Mammary epithelial cell (primary cell): ENCODE measurements at regions of chr17 and their contacts with region 1.

Region 1: DNA sequence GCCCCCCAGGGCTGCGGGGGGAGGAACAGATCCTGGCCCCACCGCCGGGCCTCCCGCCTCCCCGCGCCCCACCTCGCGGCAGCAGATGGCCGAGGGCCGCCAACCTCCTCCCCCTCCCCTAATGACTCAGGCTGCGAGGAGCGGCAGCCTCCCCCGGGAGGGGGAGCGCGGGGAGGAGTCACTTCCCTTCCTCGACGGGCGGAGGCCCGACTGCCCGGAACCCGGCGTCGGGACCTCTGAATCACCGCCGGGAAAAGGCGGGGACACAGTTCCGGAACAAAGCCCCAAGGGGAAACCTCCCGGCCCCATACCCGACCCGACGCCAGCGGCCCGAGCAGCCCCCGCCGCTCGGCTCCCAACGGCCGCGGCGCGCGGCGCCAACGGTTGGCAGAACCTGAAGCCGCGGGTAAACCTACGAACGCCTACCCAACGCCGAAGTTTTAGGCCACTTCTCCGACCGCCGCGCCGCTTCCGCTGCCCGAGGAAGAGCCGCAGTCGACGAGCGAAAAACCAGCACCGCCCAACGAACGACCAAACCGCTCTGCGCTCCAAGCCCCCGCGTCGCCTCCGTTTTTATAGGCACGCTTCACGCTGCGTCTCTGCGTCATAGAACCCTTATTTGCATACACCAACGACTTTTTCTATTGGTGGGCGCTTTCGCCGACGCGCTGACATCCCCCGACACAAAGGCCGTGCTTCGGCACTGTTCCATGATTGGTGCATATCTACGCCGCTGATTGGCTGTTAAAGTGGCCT is 5.2 kb upstream of the UNK start:
- DNase-seq: peak; percentile 100
- H3K4me3 ChIP-seq: peak overlapping the region; percentile 65 to 95 (median 73)
- H3K27ac ChIP-seq: peak overlapping the region; percentile 89
- H3K4me1 ChIP-seq: peaks cover 30% of the 10 kb centered on the region
- H3K27me3 ChIP-seq: no peaks in the 10 kb centered on the region
- CTCF ChIP-seq: no peak

Region 2: DNA sequence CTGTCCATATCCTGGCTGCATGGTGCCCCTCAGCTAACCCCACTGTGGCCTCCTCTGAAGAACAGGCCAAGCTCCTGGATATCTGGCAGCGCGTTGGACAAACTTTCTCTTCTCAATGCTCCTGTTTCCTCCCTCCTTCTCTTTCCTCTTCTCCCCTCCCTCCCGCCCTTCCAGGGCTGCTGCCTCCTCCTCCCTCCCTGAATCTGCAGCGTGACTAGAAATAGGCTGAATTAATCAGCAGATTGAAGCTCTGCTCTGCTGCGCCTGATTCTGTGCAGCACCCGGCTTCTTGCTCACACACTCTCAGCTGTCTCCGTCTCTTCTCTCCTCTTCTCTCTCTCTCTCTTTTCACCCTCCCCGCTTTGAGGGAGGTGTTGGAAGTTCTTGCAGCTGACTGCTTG is 303.1 kb before region 1 on chr17:
- CTCF ChIA-PET with region 1: no interaction called
- dilution Hi-C with region 1: no loop called
- in situ Hi-C with region 1: no loop called
- intact Hi-C with region 1: no loop called
- DNase-seq: no peak
- H3K4me3 ChIP-seq: no peak overlapping the region
- H3K27ac ChIP-seq: no peak overlapping the region
- H3K4me1 ChIP-seq: no peaks in the 10 kb centered on the region
- H3K27me3 ChIP-seq: no peaks in the 10 kb centered on the region
- CTCF ChIP-seq: no peak

Region 3: GRCh38 chr17:75720725-75721462 is 58.5 kb before region 1 on chr17 and contains the start of gene ITGB4:
- CTCF ChIA-PET with region 1: no interaction called
- dilution Hi-C with region 1: no loop called
- in situ Hi-C with region 1: no loop called
- intact Hi-C with region 1: loop called (anchors 2 kb)
- DNase-seq: peak; percentile 92
- H3K4me3 ChIP-seq: peak within 1 kb of the TSS; percentile 72 to 98 (median 95)
- H3K27ac ChIP-seq: peak within 1 kb of the TSS; percentile 82
- H3K4me1 ChIP-seq: peaks cover 25% of the 10 kb centered on the region
- H3K27me3 ChIP-seq: no peaks in the 10 kb centered on the region
- CTCF ChIP-seq: no peak
- total RNA-seq, gene ITGB4: 2,525 to 2,618 TPM

Region 4: GRCh38 chr17:75764711-75765421 is 14.5 kb before region 1 on chr17 and contains the start of gene GALK1:
- CTCF ChIA-PET with region 1: interaction called, 7 read pairs
- dilution Hi-C with region 1: no loop called
- in situ Hi-C with region 1: no loop called
- intact Hi-C with region 1: loop called (anchors 1 kb)
- DNase-seq: peak; percentile 76
- H3K4me3 ChIP-seq: peak within 1 kb of the TSS; percentile 45 to 57 (median 47)
- H3K27ac ChIP-seq: peak within 1 kb of the TSS; percentile 20
- H3K4me1 ChIP-seq: peaks cover 9% of the 10 kb centered on the region
- H3K27me3 ChIP-seq: no peaks in the 10 kb centered on the region
- CTCF ChIP-seq: peak; percentile 6 to 74
- total RNA-seq, gene GALK1: 1.5 to 3.0 TPM

Region 5: GRCh38 chr17:75827252-75828115 is 48.1 kb after region 1 on chr17:
- CTCF ChIA-PET with region 1: no interaction called
- dilution Hi-C with region 1: no loop called
- in situ Hi-C with region 1: no loop called
- intact Hi-C with region 1: loop called (anchors 2 kb)
- DNase-seq: no peak
- H3K4me3 ChIP-seq: no peak overlapping the region
- H3K27ac ChIP-seq: no peak overlapping the region
- H3K4me1 ChIP-seq: no peaks in the 10 kb centered on the region
- H3K27me3 ChIP-seq: no peaks in the 10 kb centered on the region
- CTCF ChIP-seq: peak; percentile 48 to 60

Region 6: GRCh38 chr17:75855310-75856081 is 76.1 kb after region 1 on chr17 and contains the start of gene WBP2:
- CTCF ChIA-PET with region 1: no interaction called
- dilution Hi-C with region 1: no loop called
- in situ Hi-C with region 1: no loop called
- intact Hi-C with region 1: loop called (anchors 1 kb)
- DNase-seq: peak; percentile 100
- H3K4me3 ChIP-seq: peak within 1 kb of the TSS; percentile 66 to 90 (median 84)
- H3K27ac ChIP-seq: peak within 1 kb of the TSS; percentile 81
- H3K4me1 ChIP-seq: peaks cover 26% of the 10 kb centered on the region
- H3K27me3 ChIP-seq: no peaks in the 10 kb centered on the region
- CTCF ChIP-seq: peak in 1 of 2 donors; percentile 37
- total RNA-seq, gene WBP2: 50.2 to 88.0 TPM

Region 7: DNA sequence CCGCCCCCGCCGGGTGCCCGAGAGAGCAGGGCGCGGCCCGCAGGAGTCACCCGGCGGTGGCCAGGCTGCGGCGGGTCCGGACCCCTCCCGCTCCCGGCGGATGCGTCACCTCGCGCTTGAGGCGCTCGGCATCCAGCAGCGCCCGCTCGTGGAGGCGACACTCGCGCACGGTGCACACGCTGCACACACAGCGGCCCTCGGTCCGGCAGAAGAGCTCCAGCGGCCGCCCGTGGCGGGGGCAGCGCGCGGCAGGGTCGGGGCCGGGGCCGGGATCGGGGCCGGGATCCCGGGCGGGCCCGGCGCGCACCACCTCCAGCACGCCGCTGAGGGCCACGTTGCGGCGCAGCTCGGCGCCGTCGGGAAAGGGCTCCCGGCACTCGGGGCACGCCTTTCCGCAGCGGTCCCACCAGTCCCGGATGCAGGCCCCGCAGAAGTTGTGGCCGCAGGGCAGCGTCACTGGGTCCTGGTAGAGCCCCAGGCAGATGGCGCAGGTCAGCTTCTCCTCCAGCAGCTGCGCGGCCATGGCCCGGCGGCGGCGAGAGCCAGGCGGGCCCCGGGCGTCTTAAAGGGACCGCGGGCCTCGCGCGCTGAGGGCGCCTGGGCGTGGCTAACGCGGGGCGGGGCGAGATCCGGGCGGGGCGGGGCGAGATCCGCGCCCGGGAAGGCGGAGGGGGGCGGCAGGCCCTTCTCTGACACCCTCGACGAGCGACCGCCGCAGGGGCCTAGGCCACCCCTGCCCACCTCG is 117.2 kb after region 1 on chr17 and contains the start of gene TRIM65:
- CTCF ChIA-PET with region 1: no interaction called
- dilution Hi-C with region 1: no loop called
- in situ Hi-C with region 1: no loop called
- intact Hi-C with region 1: loop called (anchors 2 kb)
- DNase-seq: peak; percentile 75
- H3K4me3 ChIP-seq: peak within 1 kb of the TSS; percentile 51 to 84 (median 77)
- H3K27ac ChIP-seq: peak within 1 kb of the TSS; percentile 40
- H3K4me1 ChIP-seq: peaks cover 8% of the 10 kb centered on the region
- H3K27me3 ChIP-seq: no peaks in the 10 kb centered on the region
- CTCF ChIP-seq: peak; percentile 9 to 53
- total RNA-seq, gene TRIM65: 19.3 to 20.2 TPM